Psoas muscle (tissue), 8 donors: ENCODE measurements at regions of chr10 and their contacts with region 1.

Region 1: GRCh38 chr10:19930936-19931893 is 115.0 kb downstream of the PLXDC2 start:
- DNase-seq: peak in 1 of 2 donors; percentile 22
- ATAC-seq: peak; percentile 68 to 89 (median 88)
- H3K4me3 ChIP-seq: peak overlapping the region; percentile 32
- H3K27ac ChIP-seq: peak overlapping the region; percentile 73
- H3K4me1 ChIP-seq: peaks cover 27% of the 10 kb centered on the region
- H3K27me3 ChIP-seq: no peaks in the 10 kb centered on the region
- CTCF ChIP-seq: no peak

Region 2: DNA sequence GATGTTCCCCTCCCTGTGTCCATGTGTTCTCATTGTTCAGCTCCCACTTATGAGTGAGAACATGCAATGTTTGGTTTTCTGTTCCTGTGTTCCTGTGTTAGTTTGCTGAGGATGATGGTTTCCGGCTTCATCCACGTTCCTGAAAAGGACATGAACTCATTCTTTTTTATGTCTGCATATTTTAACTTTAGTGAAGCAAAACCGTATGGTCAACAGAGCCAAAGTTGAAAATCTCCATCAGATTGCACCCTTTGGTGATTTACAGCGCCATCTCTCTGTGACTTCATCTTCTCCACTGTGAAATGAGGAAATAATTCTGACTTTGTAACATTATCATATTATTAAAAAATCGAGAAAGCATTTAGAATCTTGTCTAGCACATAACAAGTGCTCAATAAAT is 247.3 kb before region 1 on chr10:
- intact Hi-C with region 1: no loop called
- DNase-seq: no peak
- ATAC-seq: no peak
- H3K4me3 ChIP-seq: no peak overlapping the region
- H3K27ac ChIP-seq: no peak overlapping the region
- H3K4me1 ChIP-seq: no peaks in the 10 kb centered on the region
- H3K27me3 ChIP-seq: no peaks in the 10 kb centered on the region
- CTCF ChIP-seq: no peak

Region 3: DNA sequence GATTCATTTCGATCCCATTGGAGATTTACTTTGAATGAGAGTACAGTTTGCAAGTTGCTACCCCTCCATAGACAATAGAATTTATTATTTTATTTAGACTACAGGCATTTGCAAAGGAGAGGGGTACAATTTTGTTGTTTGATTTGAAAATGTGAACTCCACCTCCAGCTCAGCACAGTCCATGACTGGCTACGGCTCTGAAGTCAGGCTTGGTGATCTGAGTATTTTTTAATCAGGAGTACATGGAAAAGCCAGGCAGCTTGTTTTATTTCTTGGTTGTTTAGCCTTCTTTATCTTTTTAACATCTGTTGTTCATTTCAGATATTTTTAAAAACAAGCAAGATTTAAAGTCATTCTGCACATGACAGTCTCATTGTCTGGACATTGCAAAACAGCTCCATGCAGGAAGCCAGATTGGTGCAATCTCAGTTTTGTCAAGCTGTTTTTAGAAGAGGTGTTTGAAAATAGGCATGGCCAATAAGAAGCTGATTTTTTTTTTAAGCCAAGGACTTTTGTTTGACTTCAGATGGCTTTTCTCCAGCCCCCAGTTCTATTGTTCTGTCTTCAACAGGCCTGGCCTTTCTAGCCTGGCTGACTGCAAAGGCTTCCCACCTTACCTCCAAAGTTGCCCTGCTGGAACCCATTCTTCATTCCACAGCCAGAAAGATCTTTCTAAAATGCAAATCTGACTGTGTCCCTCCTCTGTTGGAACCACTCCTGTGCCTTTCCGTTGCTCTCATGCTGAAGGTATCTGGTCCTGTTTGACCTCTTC is 102.8 kb before region 1 on chr10:
- intact Hi-C with region 1: no loop called
- DNase-seq: no peak
- ATAC-seq: peak in 2 of 4 donors; percentile 49 to 78
- H3K4me3 ChIP-seq: no peak overlapping the region
- H3K27ac ChIP-seq: peak overlapping the region; percentile 47
- H3K4me1 ChIP-seq: peaks cover 31% of the 10 kb centered on the region
- H3K27me3 ChIP-seq: no peaks in the 10 kb centered on the region
- CTCF ChIP-seq: no peak

Region 4: GRCh38 chr10:19847321-19847720 is 83.9 kb before region 1 on chr10:
- intact Hi-C with region 1: no loop called
- DNase-seq: no peak
- ATAC-seq: no peak
- H3K4me3 ChIP-seq: no peak overlapping the region
- H3K27ac ChIP-seq: no peak overlapping the region
- H3K4me1 ChIP-seq: no peaks in the 10 kb centered on the region
- H3K27me3 ChIP-seq: peaks cover 0 to 1% (median 0%) of the 10 kb centered on the region in 3 donors
- CTCF ChIP-seq: no peak

Region 5: GRCh38 chr10:19874773-19875172 is 56.4 kb before region 1 on chr10:
- intact Hi-C with region 1: loop called in 1 of 2 experiments (anchors 5 kb)
- DNase-seq: no peak
- ATAC-seq: peak in 3 of 4 donors; percentile 75 to 90 (median 86)
- H3K4me3 ChIP-seq: no peak overlapping the region
- H3K27ac ChIP-seq: peak overlapping the region; percentile 59
- H3K4me1 ChIP-seq: peaks cover 3% of the 10 kb centered on the region
- H3K27me3 ChIP-seq: no peaks in the 10 kb centered on the region
- CTCF ChIP-seq: no peak